RWPE1 (cell line): ENCODE measurements at regions of chr11 and their contacts with region 1.

Region 1: GRCh38 chr11:78645226-78646202 is 70.8 kb upstream of the NARS2 start:
- DNase-seq: peak; percentile 71
- H3K27ac ChIP-seq: no peak overlapping the region; the same call in 1 of the 2 replicates
- CTCF ChIP-seq: peak; percentile 91

Region 2: GRCh38 chr11:78659326-78660270 is 14.1 kb after region 1 on chr11:
- CTCF ChIA-PET with region 1: interaction called, 10 read pairs
- POLR2A ChIA-PET with region 1: no interaction called
- DNase-seq: no peak
- H3K27ac ChIP-seq: peak overlapping the region; percentile 65
- CTCF ChIP-seq: no peak

Region 3: GRCh38 chr11:78715639-78716311 is 70.3 kb after region 1 on chr11:
- CTCF ChIA-PET with region 1: interaction called, 48 read pairs
- POLR2A ChIA-PET with region 1: interaction called, 8 read pairs
- DNase-seq: peak; percentile 88
- H3K27ac ChIP-seq: peak overlapping the region; percentile 17; the same call in 1 of the 2 replicates
- CTCF ChIP-seq: peak; percentile 60

Region 4: GRCh38 chr11:78759071-78759470 is 113.6 kb after region 1 on chr11:
- CTCF ChIA-PET with region 1: no interaction called
- POLR2A ChIA-PET with region 1: no interaction called
- DNase-seq: no peak
- H3K27ac ChIP-seq: no peak overlapping the region
- CTCF ChIP-seq: no peak

Region 5: DNA sequence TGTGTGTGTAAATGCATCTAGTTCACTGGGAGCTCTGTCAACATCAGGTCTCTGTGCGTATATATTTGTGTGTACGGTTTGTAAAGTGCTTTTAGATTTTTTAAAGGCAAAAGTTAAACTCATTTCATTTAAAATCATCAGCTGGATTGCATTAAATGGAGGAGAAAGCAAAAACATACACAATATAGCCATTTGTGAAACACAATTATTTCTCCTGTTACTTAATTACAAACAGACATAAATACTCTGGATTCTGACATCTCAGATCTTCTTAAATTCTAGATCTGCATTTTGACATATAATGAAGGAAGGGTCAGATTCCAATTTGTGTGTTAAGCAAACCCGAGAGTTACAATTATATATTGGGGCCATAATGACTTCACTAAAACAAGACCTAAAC is 204.6 kb after region 1 on chr11:
- CTCF ChIA-PET with region 1: no interaction called
- POLR2A ChIA-PET with region 1: no interaction called
- DNase-seq: no peak
- H3K27ac ChIP-seq: no peak overlapping the region
- CTCF ChIP-seq: no peak

Region 6: DNA sequence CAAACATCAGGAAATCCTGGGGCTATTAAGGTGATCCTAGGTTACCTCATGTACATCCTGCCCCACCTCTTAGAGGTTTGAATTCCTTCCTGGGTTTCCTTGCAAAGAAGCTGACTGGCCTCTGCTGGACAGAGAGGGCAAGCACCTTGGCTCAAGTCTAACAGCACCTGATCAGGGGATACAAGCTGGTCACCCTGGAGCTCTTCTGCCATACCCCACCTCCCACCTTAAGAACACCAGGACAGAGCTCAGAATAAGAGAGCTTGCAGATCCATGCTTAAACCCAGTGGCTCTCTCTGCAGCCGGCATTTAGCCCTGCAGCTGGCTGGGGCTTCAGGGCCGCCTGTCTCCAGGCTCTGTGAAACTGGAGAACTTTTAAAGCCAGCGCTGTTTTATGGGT is 315.7 kb after region 1 on chr11:
- CTCF ChIA-PET with region 1: interaction called, 14 read pairs
- POLR2A ChIA-PET with region 1: no interaction called
- DNase-seq: peak; percentile 81
- H3K27ac ChIP-seq: no peak overlapping the region
- CTCF ChIP-seq: 0 out of 2 replicates have a peak, but pooled peaks have one; percentile 43

Region 7: DNA sequence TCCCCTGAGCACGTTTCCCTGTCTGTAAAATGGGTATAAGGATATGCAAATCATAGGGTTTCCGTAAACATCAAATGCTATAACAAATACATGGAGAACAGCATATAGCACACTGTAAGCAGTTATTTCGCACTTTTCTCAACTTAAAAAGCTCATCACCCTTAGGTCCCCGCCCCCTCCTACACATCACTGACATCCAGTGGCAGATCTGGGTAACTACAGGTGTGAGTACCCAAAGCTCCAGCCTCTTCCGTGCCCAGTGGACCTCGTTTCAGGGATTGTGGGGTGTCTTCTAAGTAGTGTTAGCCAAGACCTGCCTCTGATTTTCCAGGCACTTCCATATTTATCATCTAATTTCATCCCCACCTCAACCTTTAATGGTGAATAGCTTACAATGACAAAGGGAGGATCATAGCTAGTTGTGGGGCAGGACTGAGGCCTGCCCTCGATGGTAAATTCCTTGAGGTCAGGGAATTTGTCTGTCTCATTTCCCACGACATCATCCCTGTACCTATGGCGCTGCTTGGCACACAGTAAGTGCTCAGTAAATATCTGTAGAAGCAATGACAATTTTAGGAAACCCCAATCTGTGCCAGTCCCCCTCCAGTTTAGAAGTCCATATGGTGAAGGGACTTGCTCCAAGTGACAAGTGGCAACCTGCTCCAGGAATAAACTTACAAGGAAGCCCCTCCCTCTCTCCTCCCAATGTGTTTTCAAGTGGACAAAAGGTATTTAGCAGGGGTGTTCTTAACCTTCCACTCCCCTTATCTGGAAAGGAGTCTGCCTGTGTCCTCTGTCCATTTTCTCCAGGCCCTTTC is 454.8 kb after region 1 on chr11:
- CTCF ChIA-PET with region 1: interaction called, 16 read pairs
- POLR2A ChIA-PET with region 1: no interaction called
- DNase-seq: peak; percentile 76
- H3K27ac ChIP-seq: no peak overlapping the region
- CTCF ChIP-seq: peak; percentile 63